ENCODE measurements at regions of chr16 and their contacts with region 1.

Region 1: GRCh38 chr16:48173889-48174288 is 18.1 kb upstream of the ABCC12 start:
- DNase-seq: no peak
- H3K4me3 ChIP-seq: no peak overlapping the region
- CTCF ChIP-seq: no peak
- POLR2A ChIP-seq: no peak

Region 2: DNA sequence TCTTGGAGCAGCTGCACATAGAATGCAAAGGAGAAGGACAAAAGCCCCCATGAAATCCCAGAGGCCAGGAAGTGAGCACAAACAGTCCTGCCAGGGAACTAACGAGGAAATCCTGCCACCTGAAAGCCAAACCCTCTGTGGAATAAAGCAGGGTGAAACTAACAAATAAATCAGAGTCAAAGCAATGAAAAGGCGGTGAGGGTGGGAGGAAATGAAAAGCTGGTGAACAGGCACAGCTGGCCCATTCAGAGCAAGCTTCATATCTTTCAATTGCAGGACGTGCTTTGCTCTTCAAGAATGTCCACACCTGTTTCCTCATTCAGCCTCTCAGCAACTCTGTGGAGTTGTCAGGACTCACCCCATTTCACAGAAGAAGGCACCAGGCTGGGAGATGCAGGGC is 126.2 kb before region 1 on chr16:
- intact Hi-C with region 1: loop called (anchors 5 kb)
- DNase-seq: peak in 1 of 2 donors; percentile 28
- H3K4me3 ChIP-seq: no peak overlapping the region
- CTCF ChIP-seq: no peak
- POLR2A ChIP-seq: no peak